HepG2 (cell line): ENCODE measurements at regions of chr5 and their contacts with region 1.

Region 1: DNA sequence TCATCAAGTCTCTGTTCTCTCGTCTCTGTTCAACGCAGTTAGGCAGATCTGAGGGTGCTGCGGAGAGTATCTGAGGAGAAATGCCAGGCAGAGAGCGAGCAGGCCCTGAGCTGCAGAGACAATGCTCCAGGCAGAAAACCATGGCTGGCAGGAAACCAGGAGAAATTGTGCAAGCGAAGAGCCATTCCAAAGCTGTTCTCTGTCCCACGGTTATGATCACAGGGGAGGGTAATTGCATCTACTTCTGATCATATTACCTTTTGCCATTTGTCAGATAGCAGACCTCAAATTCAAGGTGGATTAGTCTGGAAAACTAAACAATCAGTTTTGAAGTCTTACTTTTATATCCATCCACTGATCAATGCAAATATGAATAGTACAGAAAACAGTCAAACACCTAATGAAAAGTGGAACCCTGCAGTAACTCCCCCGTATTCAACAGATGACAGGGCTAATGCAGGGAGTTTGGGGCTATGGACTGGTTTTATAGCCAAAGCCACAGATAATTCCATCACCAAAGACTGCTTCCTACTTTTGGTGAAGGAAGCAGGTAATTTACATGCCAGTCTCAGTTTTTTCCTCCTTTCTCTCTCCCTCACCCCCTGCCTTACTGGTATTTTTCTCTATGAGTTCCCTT is 228.0 kb downstream of the DCP2 start:
- DNase-seq: peak; percentile 45
- ATAC-seq: peak; percentile 58
- H3K4me3 ChIP-seq: no peak overlapping the region
- H3K27ac ChIP-seq: peak overlapping the region; percentile 3
- H3K4me1 ChIP-seq: peaks cover 38% of the 10 kb centered on the region
- H3K27me3 ChIP-seq: peaks cover 0 to 8% of the 10 kb centered on the region in 2 experiments; a peak in 1 of 5 replicates
- CTCF ChIP-seq: no peak
- EP300 ChIP-seq: no peak
- POLR2A ChIP-seq: no peak
- RAD21 ChIP-seq: no peak

Region 2: GRCh38 chr5:112649882-112650281 is 554.8 kb before region 1 on chr5:
- CTCF ChIA-PET with region 1: no interaction called
- POLR2A ChIA-PET with region 1: no interaction called
- in situ Hi-C with region 1: no loop called
- intact Hi-C with region 1: no loop called
- DNase-seq: no peak
- ATAC-seq: no peak
- H3K4me3 ChIP-seq: no peak overlapping the region
- H3K27ac ChIP-seq: no peak overlapping the region
- H3K4me1 ChIP-seq: no peaks in the 10 kb centered on the region
- H3K27me3 ChIP-seq: no peaks in the 10 kb centered on the region; a peak in 2 of 5 replicates
- CTCF ChIP-seq: no peak
- EP300 ChIP-seq: no peak
- POLR2A ChIP-seq: no peak
- RAD21 ChIP-seq: no peak

Region 3: DNA sequence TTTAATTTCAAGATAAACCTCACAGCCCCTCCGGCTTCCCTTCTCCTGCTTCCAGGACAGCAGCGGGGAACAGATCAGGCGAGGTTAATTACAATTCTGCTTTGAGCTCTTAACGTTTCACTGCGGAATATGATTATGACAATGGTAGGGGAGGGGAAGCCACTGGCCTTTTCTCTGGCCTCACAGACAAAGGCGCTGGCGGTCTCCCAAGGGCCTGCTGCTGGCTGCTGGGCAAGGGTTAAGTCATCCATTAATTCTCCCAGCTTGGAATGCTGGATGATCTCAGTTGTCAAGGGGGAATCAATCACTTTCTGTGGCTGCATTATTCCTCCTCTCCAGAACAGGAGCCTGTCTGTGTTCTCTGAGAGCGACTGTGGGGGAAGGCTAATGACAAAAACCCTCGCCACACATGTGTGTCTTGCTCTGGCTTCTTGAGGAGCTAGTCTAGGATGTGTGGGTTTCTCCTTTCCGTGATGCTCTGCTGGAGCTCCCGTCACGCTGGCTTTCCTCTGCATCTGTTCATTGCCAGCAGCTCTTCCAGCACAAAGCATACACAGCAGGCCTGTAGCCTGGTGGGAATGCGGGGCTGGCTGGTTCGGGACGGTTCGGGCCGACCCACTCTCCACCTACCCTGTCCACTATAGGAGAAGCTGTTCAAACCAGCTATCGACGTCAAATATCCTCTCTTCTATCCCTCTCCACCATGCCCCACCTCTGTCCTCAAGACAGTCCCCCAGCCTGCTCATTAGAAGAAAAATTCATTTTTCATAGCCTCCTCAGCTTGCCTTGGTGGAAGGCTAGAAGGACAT is 145.2 kb before region 1 on chr5:
- CTCF ChIA-PET with region 1: no interaction called
- POLR2A ChIA-PET with region 1: no interaction called
- in situ Hi-C with region 1: no loop called
- intact Hi-C with region 1: loop called (anchors 5 kb)
- DNase-seq: no peak
- ATAC-seq: no peak
- H3K4me3 ChIP-seq: no peak overlapping the region
- H3K27ac ChIP-seq: no peak overlapping the region
- H3K4me1 ChIP-seq: no peaks in the 10 kb centered on the region
- H3K27me3 ChIP-seq: no peaks in the 10 kb centered on the region
- CTCF ChIP-seq: no peak
- EP300 ChIP-seq: no peak
- POLR2A ChIP-seq: no peak
- RAD21 ChIP-seq: no peak

Region 4: DNA sequence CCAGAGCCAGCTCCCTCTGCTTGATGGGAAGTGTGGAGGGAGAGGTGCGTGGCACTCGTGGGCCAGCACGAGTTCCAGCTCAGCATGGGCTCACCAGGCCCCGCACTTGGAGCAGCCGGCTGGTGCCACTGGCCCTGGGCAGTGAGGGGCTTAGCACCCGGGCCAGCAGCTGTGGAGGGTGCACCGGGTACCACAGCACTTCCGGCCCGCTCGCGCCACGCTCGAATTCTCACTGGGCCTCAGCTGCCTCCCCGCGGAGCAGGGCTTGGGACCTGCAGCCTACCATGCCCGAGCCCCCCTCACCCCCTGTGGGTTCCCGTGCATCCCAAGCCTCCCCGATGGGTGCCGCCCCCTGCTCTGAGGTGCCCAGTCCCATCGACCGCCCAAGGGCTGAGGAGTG is 129.6 kb before region 1 on chr5:
- CTCF ChIA-PET with region 1: no interaction called
- POLR2A ChIA-PET with region 1: no interaction called
- in situ Hi-C with region 1: no loop called
- intact Hi-C with region 1: no loop called
- DNase-seq: no peak
- ATAC-seq: no peak
- H3K4me3 ChIP-seq: no peak overlapping the region
- H3K27ac ChIP-seq: no peak overlapping the region
- H3K4me1 ChIP-seq: peaks cover 14% of the 10 kb centered on the region
- H3K27me3 ChIP-seq: no peaks in the 10 kb centered on the region
- CTCF ChIP-seq: no peak
- EP300 ChIP-seq: no peak
- POLR2A ChIP-seq: no peak
- RAD21 ChIP-seq: no peak

Region 5: DNA sequence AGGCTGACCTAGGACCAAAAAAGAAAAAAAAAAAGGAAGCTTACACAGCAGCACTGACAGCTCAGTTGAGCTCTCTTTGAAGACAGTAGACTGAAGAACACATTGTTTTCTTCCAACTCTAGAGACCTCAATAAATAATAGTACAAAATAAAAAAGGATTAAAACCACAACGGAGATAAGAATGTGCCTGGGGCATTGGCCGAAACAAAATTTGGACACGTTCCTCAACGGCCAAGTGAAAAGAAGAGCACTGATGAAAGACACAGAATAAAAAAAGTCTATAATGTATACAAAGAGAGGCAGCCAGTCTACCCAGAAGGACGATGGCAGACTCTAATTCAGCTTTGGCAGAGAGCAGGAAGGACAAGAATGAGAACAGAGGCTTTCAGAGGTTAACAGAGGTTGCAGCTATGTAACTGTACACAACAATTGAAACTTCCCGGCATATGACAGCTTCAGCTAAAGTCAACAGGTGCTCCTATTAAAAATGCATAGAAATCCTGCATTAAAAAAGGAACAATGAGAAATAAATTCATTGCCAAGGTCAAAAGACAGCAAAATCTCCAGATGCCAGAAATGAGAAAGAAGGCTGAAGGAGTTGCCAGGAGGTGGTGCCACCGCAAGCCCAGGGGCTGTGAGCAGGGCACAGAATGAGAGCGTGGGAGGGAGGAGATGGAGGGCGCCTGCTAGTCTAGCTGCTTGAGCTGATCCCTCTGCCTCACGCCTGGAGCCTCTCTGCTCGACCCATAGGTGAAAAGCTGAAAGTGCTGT is 114.1 kb before region 1 on chr5:
- CTCF ChIA-PET with region 1: no interaction called
- POLR2A ChIA-PET with region 1: no interaction called
- in situ Hi-C with region 1: no loop called
- intact Hi-C with region 1: no loop called
- DNase-seq: no peak
- ATAC-seq: no peak
- H3K4me3 ChIP-seq: no peak overlapping the region
- H3K27ac ChIP-seq: no peak overlapping the region
- H3K4me1 ChIP-seq: no peaks in the 10 kb centered on the region
- H3K27me3 ChIP-seq: no peaks in the 10 kb centered on the region
- CTCF ChIP-seq: no peak
- EP300 ChIP-seq: no peak
- POLR2A ChIP-seq: no peak
- RAD21 ChIP-seq: no peak